ENCODE measurements at regions of chr21 and their contacts with region 1.

Region 1: DNA sequence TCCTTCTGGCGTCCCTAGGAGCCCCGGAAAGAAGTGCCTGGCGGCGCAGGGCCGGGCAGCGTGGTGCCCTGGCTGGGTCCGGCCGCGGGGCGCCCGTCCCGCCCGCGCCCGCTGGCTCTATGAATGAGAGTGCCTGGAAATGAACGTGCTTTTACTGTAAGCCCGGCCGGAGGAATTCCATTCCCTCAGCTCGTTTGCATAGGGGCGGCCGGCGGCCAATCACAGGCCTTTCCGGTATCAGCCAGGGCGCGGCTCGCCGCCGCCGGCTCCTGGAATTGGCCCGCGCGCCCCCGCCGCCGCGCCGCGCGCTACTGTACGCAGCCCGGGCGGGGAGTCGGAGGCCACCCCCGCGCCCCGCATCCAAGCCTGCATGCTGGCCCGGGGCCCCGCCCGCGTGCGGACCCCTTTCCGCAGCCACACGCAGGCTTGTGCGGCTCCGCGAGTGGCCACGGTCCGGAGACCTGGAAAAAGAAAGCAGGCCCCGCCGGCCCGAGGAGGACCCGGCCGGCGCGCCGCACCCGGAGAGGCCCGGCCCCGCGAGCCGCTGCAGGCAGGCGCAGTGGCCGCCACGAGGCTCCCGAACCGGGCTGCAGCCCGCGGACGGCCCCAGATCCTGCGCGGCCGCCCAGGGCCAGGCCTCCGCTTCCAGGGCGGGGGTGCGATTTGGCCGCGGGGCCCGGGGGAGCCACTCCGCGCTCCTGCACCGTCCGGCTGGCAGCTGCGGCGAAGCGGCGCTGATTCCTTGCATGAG is 160.4 kb downstream of the RUNX1 start:
- DNase-seq: peak; percentile 90
- ATAC-seq: peak; percentile 79
- H3K4me3 ChIP-seq: peak overlapping the region; percentile 86 to 96 (median 94)
- H3K27ac ChIP-seq: peak overlapping the region; percentile 87
- H3K4me1 ChIP-seq: peaks cover 16% of the 10 kb centered on the region
- H3K27me3 ChIP-seq: no peaks in the 10 kb centered on the region; a peak in 1 of 5 replicates
- CTCF ChIP-seq: no peak
- EP300 ChIP-seq: peak in 1 of 2 experiments; percentile 12; a peak in 1 of 4 replicates
- POLR2A ChIP-seq: peak in 1 of 2 experiments; percentile 97; a peak in 2 of 4 replicates
- RAD21 ChIP-seq: peak; percentile 37; the same call in 1 of the 2 replicates

Region 2: DNA sequence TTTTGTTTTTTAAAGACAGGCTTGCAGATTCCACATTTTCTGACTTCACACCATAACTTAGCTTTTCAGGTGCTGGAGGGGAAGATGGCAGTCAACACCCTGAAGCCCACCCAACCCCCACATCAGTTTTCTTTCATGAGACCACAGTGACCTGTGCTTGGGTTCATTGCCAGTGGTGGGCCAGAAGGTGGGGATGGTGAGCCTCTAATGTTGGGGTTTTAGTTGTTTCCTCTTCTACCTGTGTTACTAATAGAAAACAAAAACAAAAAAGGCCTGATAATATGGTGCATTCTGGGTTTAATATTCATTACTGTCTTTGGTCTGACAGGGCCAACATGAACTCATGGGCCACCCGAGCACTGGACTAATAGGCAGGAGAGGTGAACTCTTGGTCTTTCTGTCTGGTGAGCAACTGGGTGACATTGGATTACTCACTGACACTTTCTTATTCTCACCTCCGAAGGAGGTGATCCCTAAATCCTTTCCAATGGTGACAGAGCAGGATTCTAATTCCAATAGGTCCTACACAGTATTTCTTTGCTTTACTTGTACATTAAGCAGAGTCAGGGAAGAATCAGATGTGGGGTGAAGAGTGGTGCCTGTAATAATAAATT is 87.1 kb before region 1 on chr21:
- CTCF ChIA-PET with region 1: no interaction called
- POLR2A ChIA-PET with region 1: interaction called, 47 read pairs
- in situ Hi-C with region 1: loop called (anchors 5 kb)
- intact Hi-C with region 1: loop called (anchors 5 kb)
- DNase-seq: no peak
- ATAC-seq: peak; percentile 71
- H3K4me3 ChIP-seq: no peak overlapping the region
- H3K27ac ChIP-seq: peak overlapping the region; percentile 41
- H3K4me1 ChIP-seq: peaks cover 58% of the 10 kb centered on the region
- H3K27me3 ChIP-seq: no peaks in the 10 kb centered on the region
- CTCF ChIP-seq: peak; percentile 71
- EP300 ChIP-seq: no peak
- POLR2A ChIP-seq: no peak
- RAD21 ChIP-seq: no peak; the same call in 1 of the 2 replicates

Region 3: GRCh38 chr21:34865928-34866284 is 22.8 kb before region 1 on chr21:
- CTCF ChIA-PET with region 1: no interaction called
- POLR2A ChIA-PET with region 1: interaction called, 15 read pairs
- in situ Hi-C with region 1: no loop called
- intact Hi-C with region 1: no loop called
- DNase-seq: peak; percentile 16
- ATAC-seq: peak; percentile 18
- H3K4me3 ChIP-seq: no peak overlapping the region
- H3K27ac ChIP-seq: no peak overlapping the region
- H3K4me1 ChIP-seq: peaks cover 33% of the 10 kb centered on the region
- H3K27me3 ChIP-seq: no peaks in the 10 kb centered on the region
- CTCF ChIP-seq: no peak
- EP300 ChIP-seq: no peak
- POLR2A ChIP-seq: no peak
- RAD21 ChIP-seq: no peak

Region 4: DNA sequence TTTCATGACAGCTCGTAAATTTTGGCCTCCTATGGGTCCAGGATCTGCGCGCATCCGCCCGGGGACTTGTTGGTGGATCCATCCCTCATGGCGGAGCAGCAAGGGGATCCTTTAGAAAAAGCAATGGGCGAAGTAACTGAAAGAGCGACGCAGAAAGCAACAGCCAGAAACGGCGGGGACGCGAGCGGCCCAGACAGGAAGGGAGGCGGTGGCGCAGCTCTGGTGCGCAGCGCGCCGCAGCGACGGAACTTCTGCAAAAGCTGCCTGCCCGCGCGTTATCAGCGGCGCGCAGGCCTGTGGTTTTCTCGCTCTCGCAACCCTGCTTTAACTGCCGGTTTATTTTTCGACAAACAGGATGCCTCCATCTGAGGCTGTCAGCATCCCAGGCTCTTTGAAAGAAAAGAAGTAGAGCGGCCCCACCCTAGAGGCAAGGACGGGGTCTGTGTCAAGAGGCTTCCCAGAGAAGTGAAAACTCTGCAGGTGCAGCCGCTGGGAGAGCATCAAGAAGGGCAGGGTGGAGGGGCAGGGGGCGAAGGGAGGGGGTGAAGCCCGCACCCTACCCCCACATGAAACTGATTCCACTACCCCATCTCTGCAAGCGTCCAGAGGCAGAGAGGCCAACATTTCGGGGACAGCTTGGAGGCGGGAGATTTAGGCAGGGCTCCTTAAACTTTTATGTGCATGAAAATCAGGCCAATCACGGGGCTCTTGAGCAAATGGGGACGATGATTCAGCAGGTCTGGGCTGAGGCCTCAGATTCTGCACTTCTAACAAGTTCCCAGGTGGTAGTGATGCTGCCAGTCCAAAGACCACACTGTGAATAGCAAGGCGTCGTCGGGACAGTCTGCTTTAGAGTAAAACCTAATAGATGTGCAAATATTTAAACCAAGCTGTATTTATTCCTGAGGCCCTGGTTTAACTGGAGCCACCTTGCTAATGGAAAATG is 138.1 kb after region 1 on chr21:
- CTCF ChIA-PET with region 1: no interaction called
- POLR2A ChIA-PET with region 1: interaction called, 7 read pairs
- in situ Hi-C with region 1: no loop called
- intact Hi-C with region 1: loop called (anchors 5 kb)
- DNase-seq: peak; percentile 95
- ATAC-seq: peak; percentile 86
- H3K4me3 ChIP-seq: no peak overlapping the region
- H3K27ac ChIP-seq: peak overlapping the region; percentile 73
- H3K4me1 ChIP-seq: peaks cover 71% of the 10 kb centered on the region
- H3K27me3 ChIP-seq: no peaks in the 10 kb centered on the region
- CTCF ChIP-seq: no peak
- EP300 ChIP-seq: peak; percentile 39 to 80; a peak in 2 of 4 replicates
- POLR2A ChIP-seq: 0 out of 4 replicates have a peak, but pooled peaks of 1 of the 2 experiments have one; percentile 31
- RAD21 ChIP-seq: no peak

Region 5: DNA sequence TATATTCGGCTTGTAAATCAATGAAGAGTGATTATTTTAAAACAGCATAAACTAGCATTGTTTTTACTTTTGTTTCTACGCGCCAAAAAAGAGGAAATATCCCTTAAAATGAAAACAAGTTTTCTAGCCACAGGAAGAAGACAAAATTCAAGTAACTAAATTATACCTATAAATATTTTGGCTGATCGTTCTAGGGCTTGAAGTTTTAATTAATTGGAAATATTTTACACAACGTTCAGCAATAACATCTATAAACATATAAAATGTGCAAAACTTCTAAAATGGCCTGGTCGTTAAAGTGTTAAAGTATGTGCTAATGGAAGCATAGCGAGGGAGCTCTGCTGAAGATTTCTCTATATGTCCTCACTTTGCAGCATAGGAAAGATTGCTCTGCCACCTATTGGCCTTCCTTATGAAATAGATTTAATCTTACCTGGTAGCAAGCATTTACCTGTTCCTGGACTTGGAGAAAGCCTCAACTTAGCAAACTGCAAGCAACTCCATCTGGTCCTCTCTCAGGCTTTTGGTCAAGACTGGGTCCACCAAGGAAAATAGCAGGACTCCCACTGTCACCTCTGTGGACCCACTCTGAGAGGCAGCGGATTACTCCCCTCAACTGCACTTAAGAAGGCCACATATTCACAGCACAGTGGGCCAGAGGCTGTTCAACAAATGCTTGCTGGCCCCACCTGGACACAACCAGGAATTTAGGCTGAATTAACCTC is 511.7 kb after region 1 on chr21:
- CTCF ChIA-PET with region 1: interaction called, 5 read pairs
- POLR2A ChIA-PET with region 1: interaction called, 8 read pairs
- in situ Hi-C with region 1: loop called (anchors 10 kb)
- intact Hi-C with region 1: loop called (anchors 1 kb)
- DNase-seq: peak; percentile 67
- ATAC-seq: peak; percentile 87
- H3K4me3 ChIP-seq: no peak overlapping the region
- H3K27ac ChIP-seq: no peak overlapping the region
- H3K4me1 ChIP-seq: no peaks in the 10 kb centered on the region
- H3K27me3 ChIP-seq: peaks cover 0 to 11% of the 10 kb centered on the region in 2 experiments; a peak in 3 of 5 replicates
- CTCF ChIP-seq: peak; percentile 69
- EP300 ChIP-seq: no peak
- POLR2A ChIP-seq: no peak
- RAD21 ChIP-seq: peak; percentile 62

Region 6: DNA sequence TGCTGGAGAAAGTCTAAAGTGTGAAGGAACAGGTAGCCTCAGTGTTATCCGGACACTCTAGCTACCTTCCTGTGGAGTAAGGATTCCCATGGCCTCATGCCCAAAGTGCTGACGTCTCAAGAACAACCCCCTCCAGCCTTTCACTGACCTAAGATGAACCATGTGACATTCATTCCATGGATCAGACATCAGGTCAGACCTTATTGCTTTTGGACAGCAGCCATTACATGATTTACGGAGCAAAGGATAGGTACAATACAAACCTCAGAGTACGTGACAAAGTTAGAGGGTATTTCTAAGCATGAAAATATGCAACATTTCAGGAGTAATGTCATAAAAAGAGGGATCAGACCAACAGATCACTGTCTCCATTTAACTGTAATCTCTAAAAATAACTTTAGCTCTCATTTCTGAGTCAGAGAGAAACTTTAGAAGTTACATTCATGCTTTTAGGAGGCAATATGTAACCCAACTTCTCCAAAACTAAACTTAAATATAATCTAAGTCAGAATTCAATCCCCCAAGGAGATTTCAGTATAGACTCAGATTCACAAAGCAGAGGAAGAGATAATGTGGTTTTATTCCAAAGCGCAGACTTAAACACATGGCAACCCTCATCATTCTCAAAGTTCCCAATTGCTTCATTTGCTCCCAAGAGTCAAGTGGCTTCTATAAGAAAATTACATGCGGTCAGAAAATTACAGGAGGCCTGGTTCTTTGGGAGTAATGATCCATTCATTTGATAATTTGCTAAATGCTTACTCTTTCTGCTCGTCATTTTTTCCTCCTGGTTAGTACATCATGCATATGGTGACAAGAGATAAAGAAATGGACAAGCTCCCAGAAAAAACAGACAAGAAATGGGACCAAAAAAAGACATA is 891.2 kb after region 1 on chr21:
- CTCF ChIA-PET with region 1: no interaction called
- POLR2A ChIA-PET with region 1: no interaction called
- in situ Hi-C with region 1: no loop called
- intact Hi-C with region 1: no loop called
- DNase-seq: no peak
- ATAC-seq: no peak
- H3K4me3 ChIP-seq: no peak overlapping the region
- H3K27ac ChIP-seq: no peak overlapping the region
- H3K4me1 ChIP-seq: no peaks in the 10 kb centered on the region
- H3K27me3 ChIP-seq: no peaks in the 10 kb centered on the region; a peak in 1 of 5 replicates
- CTCF ChIP-seq: no peak
- EP300 ChIP-seq: no peak
- POLR2A ChIP-seq: no peak
- RAD21 ChIP-seq: no peak

Region 7: GRCh38 chr21:35932232-35932911 is 1043.6 kb after region 1 on chr21:
- CTCF ChIA-PET with region 1: no interaction called
- POLR2A ChIA-PET with region 1: no interaction called
- in situ Hi-C with region 1: loop called (anchors 25 kb)
- intact Hi-C with region 1: no loop called
- DNase-seq: no peak
- ATAC-seq: no peak
- H3K4me3 ChIP-seq: no peak overlapping the region
- H3K27ac ChIP-seq: no peak overlapping the region
- H3K4me1 ChIP-seq: 0 out of 2 replicates have a peak, but pooled peaks cover 5% of the 10 kb centered on the region
- H3K27me3 ChIP-seq: no peaks in the 10 kb centered on the region
- CTCF ChIP-seq: no peak
- EP300 ChIP-seq: no peak
- POLR2A ChIP-seq: no peak
- RAD21 ChIP-seq: no peak

Region 8: GRCh38 chr21:36060159-36060921 is 1171.6 kb after region 1 on chr21 and contains the start of gene SETD4:
- CTCF ChIA-PET with region 1: no interaction called
- POLR2A ChIA-PET with region 1: interaction called, 10 read pairs
- in situ Hi-C with region 1: no loop called
- intact Hi-C with region 1: no loop called
- DNase-seq: peak; percentile 85
- ATAC-seq: peak; percentile 93
- H3K4me3 ChIP-seq: peak within 1 kb of the TSS; percentile 80 to 96 (median 82)
- H3K27ac ChIP-seq: peak within 1 kb of the TSS; percentile 80
- H3K4me1 ChIP-seq: peaks cover 40% of the 10 kb centered on the region
- H3K27me3 ChIP-seq: no peaks in the 10 kb centered on the region
- CTCF ChIP-seq: peak; percentile 12; the same call in 1 of the 2 replicates
- EP300 ChIP-seq: no peak
- POLR2A ChIP-seq: peak; percentile 68 to 84
- RAD21 ChIP-seq: no peak
- total RNA-seq, gene SETD4: 11.9 and 14.4 TPM in 2 replicates